Transverse colon (tissue), 4 donors: ENCODE measurements at regions of chr9 and their contacts with region 1.

Region 1: DNA sequence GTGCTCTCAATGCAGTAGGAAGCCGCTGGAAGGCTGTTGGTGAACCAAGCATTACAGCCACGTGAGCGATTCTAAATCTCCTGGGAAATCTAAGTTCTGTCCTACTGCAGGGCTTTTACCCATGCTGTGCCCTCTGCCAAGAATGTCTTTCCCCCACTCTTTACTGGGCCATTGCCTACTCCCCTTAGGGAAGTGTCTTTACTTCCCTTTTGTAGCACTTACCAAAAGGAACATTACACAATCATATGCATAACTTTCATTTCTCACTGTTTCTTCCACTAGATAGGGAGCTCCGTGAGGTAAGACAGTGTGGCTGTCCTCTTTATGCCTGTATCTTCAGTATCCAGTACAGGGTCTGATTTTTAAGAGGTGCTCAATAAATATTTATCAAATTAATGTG is 241.7 kb upstream of the NR4A3 start:
- DNase-seq: no peak
- H3K4me3 ChIP-seq: no peak overlapping the region
- H3K27ac ChIP-seq: no peak overlapping the region
- H3K4me1 ChIP-seq: no peaks in the 10 kb centered on the region
- H3K27me3 ChIP-seq: no peaks in the 10 kb centered on the region
- CTCF ChIP-seq: no peak
- EP300 ChIP-seq: no peak
- POLR2A ChIP-seq: no peak

Region 2: GRCh38 chr9:99433555-99433954 is 146.4 kb before region 1 on chr9:
- in situ Hi-C with region 1: no loop called
- intact Hi-C with region 1: no loop called
- DNase-seq: peak; percentile 9
- H3K4me3 ChIP-seq: no peak overlapping the region
- H3K27ac ChIP-seq: no peak overlapping the region
- H3K4me1 ChIP-seq: no peaks in the 10 kb centered on the region
- H3K27me3 ChIP-seq: no peaks in the 10 kb centered on the region
- CTCF ChIP-seq: no peak
- EP300 ChIP-seq: no peak
- POLR2A ChIP-seq: no peak

Region 3: GRCh38 chr9:99513441-99514112 is 66.4 kb before region 1 on chr9:
- in situ Hi-C with region 1: no loop called
- intact Hi-C with region 1: no loop called
- DNase-seq: no peak
- H3K4me3 ChIP-seq: no peak overlapping the region
- H3K27ac ChIP-seq: no peak overlapping the region
- H3K4me1 ChIP-seq: no peaks in the 10 kb centered on the region
- H3K27me3 ChIP-seq: no peaks in the 10 kb centered on the region
- CTCF ChIP-seq: no peak
- EP300 ChIP-seq: no peak
- POLR2A ChIP-seq: no peak

Region 4: GRCh38 chr9:99539925-99540324 is 40.0 kb before region 1 on chr9:
- in situ Hi-C with region 1: no loop called
- intact Hi-C with region 1: loop called (anchors 1 kb)
- DNase-seq: no peak
- H3K4me3 ChIP-seq: no peak overlapping the region
- H3K27ac ChIP-seq: no peak overlapping the region
- H3K4me1 ChIP-seq: no peaks in the 10 kb centered on the region
- H3K27me3 ChIP-seq: no peaks in the 10 kb centered on the region
- CTCF ChIP-seq: no peak
- EP300 ChIP-seq: no peak
- POLR2A ChIP-seq: no peak

Region 5: DNA sequence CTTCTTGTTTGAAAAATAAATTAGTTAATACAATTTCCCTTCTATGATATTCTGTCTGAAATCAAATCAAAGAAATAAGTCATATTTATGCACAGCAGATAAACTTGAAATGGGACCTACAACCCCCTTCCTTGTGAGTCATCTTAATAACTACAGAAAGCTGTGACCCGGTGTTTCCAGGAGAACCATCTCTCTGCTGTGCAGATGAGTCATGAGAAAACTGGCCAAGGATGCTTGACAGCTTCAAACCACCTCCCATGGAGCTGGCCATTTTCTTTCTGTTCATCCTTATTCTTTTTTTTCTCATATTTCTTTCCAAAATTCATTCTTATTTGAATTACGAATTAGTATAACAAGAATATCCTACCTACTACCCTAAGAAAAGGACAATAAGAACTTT is 198.3 kb after region 1 on chr9:
- in situ Hi-C with region 1: no loop called
- intact Hi-C with region 1: no loop called
- DNase-seq: no peak
- H3K4me3 ChIP-seq: no peak overlapping the region
- H3K27ac ChIP-seq: no peak overlapping the region
- H3K4me1 ChIP-seq: no peaks in the 10 kb centered on the region
- H3K27me3 ChIP-seq: no peaks in the 10 kb centered on the region
- CTCF ChIP-seq: no peak
- EP300 ChIP-seq: no peak
- POLR2A ChIP-seq: no peak

Region 6: GRCh38 chr9:99906403-99907207 is 326.6 kb after region 1 on chr9 and contains the start of gene STX17:
- in situ Hi-C with region 1: no loop called
- intact Hi-C with region 1: no loop called
- DNase-seq: peak; percentile 83
- H3K4me3 ChIP-seq: peak within 1 kb of the TSS; percentile 82 to 99 (median 89)
- H3K27ac ChIP-seq: peak within 1 kb of the TSS; percentile 96 to 100 (median 97)
- H3K4me1 ChIP-seq: peaks cover 6 to 23% (median 18%) of the 10 kb centered on the region in 4 donors
- H3K27me3 ChIP-seq: no peaks in the 10 kb centered on the region
- CTCF ChIP-seq: no peak
- EP300 ChIP-seq: no peak
- POLR2A ChIP-seq: peak; percentile 80
- total RNA-seq, gene STX17: 6.7 to 363 (median 37.1) TPM